H1 (cell line): ENCODE measurements at regions of chr1 and their contacts with region 1.

Region 1: DNA sequence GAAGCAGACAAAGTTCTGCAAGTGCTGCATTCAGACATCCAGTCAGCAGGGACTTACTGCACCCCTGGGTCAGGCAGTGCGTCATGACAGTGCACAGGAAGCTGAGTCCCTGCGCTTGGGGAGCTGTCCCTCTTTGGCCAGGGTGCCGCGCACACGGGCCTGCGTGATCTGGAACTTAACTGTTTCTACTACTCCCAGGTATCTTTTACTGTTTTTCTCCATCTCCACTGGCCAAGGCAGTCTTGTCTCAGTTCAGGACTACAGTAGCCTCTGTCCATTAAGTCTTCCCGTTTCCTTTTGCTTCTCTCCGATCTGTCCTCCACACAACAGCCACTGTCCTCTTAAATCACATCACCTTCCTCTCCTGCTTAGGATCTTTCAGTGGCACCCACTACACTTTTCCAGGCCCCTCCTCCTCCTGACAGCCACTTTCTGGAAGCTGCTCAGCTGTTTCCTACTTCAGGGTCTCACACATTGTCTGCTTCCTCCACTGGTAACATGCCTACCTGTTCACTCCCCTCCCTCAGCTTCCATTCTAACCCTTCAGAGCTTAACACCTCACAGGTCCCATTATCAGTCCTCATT is 15.9 kb downstream of the ERRFI1 start:
- DNase-seq: no peak
- H3K4me3 ChIP-seq: no peak overlapping the region
- H3K27ac ChIP-seq: no peak overlapping the region
- H3K4me1 ChIP-seq: peaks cover 2 to 6% (median 3%) of the 10 kb centered on the region in 4 experiments; a peak in 5 of 7 replicates
- H3K27me3 ChIP-seq: no peaks in the 10 kb centered on the region
- CTCF ChIP-seq: no peak
- EP300 ChIP-seq: no peak
- POLR2A ChIP-seq: no peak
- RAD21 ChIP-seq: no peak

Region 2: DNA sequence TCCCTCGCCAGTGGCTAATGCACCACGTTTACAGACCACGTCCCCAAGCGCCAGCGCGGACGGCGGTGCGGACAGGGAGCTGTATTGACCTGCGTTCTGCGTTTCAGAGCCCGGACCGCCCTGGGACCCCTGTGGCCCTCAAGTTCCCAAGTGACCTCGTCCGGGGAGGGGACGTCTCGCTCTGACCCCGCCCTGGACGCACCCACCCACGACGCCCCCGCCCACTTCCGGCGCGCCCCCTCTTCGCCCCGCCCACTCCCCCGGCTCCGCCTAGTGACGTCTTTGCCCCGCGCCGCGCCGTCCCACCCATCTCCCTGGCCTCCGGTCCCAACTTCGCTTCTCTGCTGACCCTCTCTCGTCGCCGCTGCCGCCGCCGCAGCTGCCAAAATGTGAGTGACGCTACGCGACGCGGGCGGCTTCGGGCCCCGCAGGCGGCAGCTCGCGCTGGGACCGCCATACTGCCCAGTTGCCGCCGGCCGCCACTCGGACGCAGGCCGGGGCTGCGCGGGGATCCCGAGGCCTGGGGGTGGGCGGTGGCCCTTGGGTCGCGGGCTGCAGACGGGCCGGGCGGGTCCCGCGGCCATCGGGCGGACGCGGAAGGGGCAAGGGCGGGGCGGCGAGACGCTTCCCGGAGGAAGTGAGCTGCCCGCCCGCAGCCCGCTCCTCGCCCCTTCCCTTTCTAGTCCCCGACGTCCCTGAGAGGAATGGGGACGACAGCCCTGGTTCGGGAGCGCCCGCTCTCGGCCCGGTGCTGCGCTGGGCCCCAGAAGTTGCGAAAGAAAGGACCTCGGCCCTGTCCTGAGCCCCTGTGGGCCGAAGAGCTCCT is 239.0 kb before region 1 on chr1 and contains the start of gene VAMP3:
- CTCF ChIA-PET with region 1: no interaction called
- POLR2A ChIA-PET with region 1: no interaction called
- DNase-seq: peak; percentile 56 to 97
- H3K4me3 ChIP-seq: peak within 1 kb of the TSS; percentile 83 to 99 (median 88)
- H3K27ac ChIP-seq: peak within 1 kb of the TSS; percentile 79
- H3K4me1 ChIP-seq: peaks cover 0 to 6% (median 2%) of the 10 kb centered on the region in 4 experiments; a peak in 5 of 7 replicates
- H3K27me3 ChIP-seq: no peaks in the 10 kb centered on the region; a peak in 1 of 7 replicates
- CTCF ChIP-seq: no peak
- EP300 ChIP-seq: no peak
- POLR2A ChIP-seq: no peak
- RAD21 ChIP-seq: no peak
- total RNA-seq, gene VAMP3: 36.7 and 41.2 TPM in 2 replicates

Region 3: GRCh38 chr1:7983086-7983778 is 26.9 kb before region 1 on chr1:
- CTCF ChIA-PET with region 1: interaction called, 100 read pairs
- POLR2A ChIA-PET with region 1: interaction called, 4 read pairs
- DNase-seq: no peak
- H3K4me3 ChIP-seq: no peak overlapping the region
- H3K27ac ChIP-seq: no peak overlapping the region
- H3K4me1 ChIP-seq: peaks cover 0 to 3% (median 1%) of the 10 kb centered on the region in 4 experiments; a peak in 1 of 7 replicates
- H3K27me3 ChIP-seq: no peaks in the 10 kb centered on the region
- CTCF ChIP-seq: no peak
- EP300 ChIP-seq: no peak
- POLR2A ChIP-seq: no peak
- RAD21 ChIP-seq: no peak

Region 4: DNA sequence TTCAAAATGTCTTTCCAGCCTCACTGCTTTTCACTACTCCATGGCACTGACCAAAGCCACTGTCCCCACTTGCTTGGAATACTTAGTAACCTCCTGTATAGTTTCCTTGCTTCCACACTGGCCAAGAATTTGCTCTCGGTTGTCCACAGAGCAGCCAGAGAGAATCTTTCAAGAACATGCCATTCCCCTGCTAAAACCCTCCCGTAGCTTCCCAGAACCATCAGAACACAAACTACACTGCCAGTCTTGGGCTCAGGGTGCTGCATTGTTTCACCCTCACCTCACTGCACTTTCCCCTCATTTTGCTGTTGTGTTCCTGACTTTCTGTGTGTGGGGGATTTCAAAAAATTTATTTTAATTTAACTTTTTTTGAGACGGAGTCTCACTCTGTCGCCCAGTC is 41.5 kb after region 1 on chr1:
- CTCF ChIA-PET with region 1: no interaction called
- POLR2A ChIA-PET with region 1: no interaction called
- DNase-seq: no peak
- H3K4me3 ChIP-seq: no peak overlapping the region
- H3K27ac ChIP-seq: no peak overlapping the region
- H3K4me1 ChIP-seq: no peaks in the 10 kb centered on the region
- H3K27me3 ChIP-seq: no peaks in the 10 kb centered on the region
- CTCF ChIP-seq: no peak
- EP300 ChIP-seq: no peak
- POLR2A ChIP-seq: no peak
- RAD21 ChIP-seq: no peak